GM13977 (cell line): ENCODE measurements at regions of chr10 and their contacts with region 1.

Region 1: DNA sequence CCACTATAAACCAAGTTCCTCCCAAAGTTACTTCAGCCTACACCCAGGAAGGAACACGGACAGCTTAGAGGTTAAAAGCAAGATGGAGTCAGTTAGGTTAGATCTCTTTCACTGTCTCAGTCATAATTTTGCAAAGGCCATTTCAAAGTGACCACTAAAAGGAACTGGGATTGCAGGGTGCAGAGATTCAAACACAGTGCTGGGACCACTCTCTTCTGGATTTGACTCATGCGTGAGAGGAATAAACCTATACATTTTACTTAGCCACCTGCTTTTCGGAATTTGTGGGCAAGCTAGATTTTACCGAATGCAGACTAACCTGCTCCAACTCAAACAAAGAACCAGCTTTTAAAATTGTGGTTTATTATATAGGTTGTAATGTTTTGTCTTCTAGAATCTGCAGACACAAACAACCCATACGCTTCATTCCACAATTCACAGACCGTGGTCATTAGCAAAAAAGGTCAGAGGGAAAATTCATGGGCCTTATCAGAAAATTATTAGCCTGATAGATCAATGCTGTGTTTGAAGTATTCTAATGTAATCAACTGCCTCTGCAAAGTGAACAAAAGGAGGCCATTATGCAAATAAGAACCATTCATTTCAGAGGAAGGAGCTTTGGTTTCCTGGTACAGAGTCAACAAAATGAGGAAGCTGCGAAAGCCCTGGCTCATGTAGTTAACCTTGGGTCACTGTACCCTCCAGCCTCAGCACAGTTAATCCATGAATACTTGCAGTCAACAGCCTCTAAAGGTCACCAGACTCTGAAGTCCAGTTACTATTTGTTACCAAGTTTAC is 342.7 kb upstream of the KLF6 start:
- DNase-seq: no peak
- CTCF ChIP-seq: no peak

Region 2: DNA sequence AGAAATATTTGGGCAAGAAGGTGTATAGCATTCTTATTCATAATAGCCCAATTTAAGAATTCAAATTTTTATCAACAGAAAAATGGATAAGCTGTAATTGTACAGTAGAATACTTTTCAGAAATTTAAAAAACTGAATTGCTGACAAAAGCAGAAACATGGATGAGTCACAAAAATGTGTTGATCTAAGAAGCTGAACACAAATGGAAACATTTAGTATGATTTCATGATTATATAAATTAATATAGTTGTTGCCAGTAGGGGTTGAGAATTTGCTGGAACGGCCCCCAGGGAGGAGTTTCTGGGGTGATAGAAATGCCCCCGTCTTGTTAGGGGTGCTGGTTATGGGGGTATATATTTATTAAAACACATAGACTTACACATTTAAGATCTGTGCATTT is 521.8 kb before region 1 on chr10:
- in situ Hi-C with region 1: no loop called
- DNase-seq: no peak
- CTCF ChIP-seq: no peak

Region 3: DNA sequence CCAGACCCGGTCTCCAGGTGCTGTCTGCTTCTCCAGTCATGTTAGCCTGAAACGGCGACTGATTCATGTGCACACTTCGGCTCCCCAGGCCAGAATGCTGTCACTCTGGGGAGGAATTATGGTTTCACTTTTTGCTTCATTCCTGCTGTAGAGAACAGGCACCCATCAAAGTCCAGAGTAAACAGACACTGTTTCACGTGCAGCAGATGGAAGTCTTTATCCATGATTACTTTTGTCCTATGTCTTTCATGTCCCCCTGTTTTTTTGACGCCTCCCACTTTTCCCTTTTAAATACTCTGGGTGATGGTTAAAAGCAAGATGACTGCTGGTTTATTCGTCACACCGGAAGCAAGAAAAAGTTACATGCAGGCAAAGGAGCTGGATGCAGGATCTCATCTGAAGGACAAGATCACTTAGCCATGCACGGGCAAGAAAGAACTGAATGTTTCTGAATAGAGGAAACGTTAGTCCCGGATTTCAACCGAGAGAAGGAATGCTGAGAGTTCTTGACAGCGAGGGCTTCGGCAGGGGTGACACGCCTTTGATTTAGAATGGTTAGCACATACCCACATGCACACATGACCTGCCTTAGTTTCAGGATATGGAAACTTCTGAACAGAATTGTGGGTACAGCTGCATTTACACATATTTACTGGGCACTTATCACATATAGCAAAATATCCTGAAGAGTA is 92.7 kb before region 1 on chr10:
- in situ Hi-C with region 1: loop called (anchors 10 kb)
- DNase-seq: no peak
- CTCF ChIP-seq: no peak

Region 4: GRCh38 chr10:4101918-4102654 is 25.6 kb before region 1 on chr10:
- in situ Hi-C with region 1: no loop called
- DNase-seq: no peak
- CTCF ChIP-seq: no peak

Region 5: GRCh38 chr10:4384245-4384644 is 256.5 kb after region 1 on chr10:
- in situ Hi-C with region 1: no loop called
- DNase-seq: no peak
- CTCF ChIP-seq: no peak